ENCODE measurements at regions of chr20 and their contacts with region 1.

Region 1: DNA sequence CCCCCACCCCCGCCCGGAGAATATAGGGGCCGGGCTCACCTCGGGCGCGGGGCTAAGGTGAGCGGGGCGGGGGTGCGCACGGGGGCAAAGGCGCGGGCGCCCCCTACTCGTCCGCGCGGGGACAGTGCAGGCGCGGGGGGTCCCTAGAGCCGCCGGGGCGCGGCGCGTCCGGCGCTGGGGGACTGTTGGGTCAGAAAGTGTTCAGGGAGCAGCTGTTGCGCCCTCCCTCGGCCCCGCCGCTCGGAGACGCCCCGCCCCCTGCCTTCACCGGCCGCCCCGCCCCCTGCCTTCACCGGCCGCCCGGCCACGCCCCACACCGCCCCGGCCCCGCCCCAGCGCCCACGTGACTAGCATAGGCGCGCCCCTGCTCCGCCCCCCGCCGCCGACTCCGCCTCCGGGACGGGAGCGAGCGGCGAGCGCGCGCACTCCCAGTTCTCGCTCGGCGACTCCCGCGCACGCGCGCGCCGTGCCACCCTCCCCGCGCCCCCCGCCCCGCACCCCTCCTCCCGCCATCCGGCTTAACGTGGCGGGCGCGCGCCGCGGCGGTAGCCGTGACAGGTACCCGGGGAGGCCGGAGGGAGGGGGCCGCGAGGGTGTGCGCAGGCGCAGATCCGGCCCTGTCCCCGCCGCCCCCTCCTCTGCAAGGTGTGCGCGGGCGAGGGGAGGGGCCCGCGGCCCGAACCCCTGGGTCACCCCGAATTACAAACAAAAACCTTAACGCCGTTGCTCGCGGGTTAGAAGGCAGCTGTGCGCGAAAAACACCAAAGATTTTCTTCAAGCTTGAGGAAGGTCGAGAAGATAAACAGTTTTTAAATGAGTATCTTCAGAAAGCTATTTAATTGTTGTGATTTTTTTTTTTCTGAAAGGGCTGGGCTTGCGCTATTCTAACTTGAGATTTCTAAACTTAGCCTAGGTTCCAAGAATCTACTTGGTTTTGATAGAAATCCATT is 704 bp upstream of the ZNF217 start:
- DNase-seq: peak; percentile 95
- ATAC-seq: peak; percentile 82
- H3K4me3 Mint-ChIP-seq: peak overlapping the region; percentile 74
- H3K27ac Mint-ChIP-seq: peak overlapping the region; percentile 66; the same call in 1 of the 2 replicates
- H3K4me1 Mint-ChIP-seq: peaks cover 66% of the 10 kb centered on the region
- H3K27me3 Mint-ChIP-seq: no peaks in the 10 kb centered on the region
- CTCF ChIP-seq: peak; percentile 26; the same call in 1 of the 2 replicates

Region 2: DNA sequence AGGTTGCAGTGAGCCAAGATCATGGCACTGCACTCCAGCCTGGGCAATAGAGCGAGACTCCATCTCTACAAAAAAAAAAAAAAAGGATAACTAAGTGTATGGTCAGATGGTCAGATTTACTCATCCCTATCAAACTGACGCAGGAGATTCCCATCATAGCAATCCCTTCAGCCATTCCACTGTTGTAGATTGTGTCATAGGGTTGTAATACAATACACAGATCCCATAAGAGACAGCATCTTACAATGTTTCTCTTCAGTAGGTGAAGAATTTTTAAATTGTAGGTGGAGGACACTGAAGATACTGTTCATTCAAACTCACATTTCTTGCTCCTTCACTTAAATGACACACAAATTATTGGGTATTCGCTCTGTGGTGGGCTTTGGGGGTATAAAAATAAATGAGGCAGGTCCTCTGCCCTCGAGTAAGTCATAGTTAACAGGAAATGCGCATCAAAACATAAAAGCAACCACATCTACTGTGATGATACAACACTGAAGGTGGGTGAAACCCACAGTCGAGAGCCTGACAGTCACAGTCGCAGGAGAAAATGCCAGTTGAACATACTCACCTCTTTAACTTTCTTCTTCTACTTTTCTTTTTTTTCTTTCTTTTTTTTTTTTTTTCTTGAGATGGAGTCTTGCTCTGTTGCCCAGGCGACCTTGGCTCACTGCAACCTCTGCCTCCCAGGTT is 206.2 kb before region 1 on chr20:
- CTCF ChIA-PET with region 1: no interaction called
- POLR2A ChIA-PET with region 1: no interaction called
- DNase-seq: no peak
- ATAC-seq: no peak
- H3K4me3 Mint-ChIP-seq: no peak overlapping the region
- H3K27ac Mint-ChIP-seq: no peak overlapping the region
- H3K4me1 Mint-ChIP-seq: peaks cover 28% of the 10 kb centered on the region
- H3K27me3 Mint-ChIP-seq: no peaks in the 10 kb centered on the region
- CTCF ChIP-seq: no peak

Region 3: DNA sequence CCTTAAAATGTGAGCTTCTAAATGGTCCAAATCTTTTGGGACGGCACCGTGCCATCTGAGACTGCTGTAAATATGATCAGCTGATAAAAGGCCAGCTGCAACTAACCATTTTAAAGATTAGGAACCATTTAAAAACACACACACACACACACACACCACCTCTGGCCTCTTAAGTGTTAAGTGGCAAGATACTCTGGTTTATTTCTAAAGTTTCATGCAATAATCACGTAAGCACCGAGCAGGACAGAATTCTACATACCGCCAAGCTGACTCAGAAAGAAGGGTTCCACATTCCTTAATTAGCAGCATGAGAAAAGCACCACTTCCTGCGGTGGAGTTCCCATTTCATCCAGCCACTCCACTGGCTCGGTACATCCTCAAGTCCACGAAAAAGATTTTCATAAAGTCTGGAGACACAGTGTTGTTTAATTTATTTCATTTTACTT is 17.1 kb after region 1 on chr20:
- CTCF ChIA-PET with region 1: interaction called, 3 read pairs
- POLR2A ChIA-PET with region 1: interaction called, 11 read pairs
- DNase-seq: no peak
- ATAC-seq: peak; percentile 55
- H3K4me3 Mint-ChIP-seq: no peak overlapping the region
- H3K27ac Mint-ChIP-seq: peak overlapping the region; percentile 88; the same call in 1 of the 2 replicates
- H3K4me1 Mint-ChIP-seq: peaks cover 49% of the 10 kb centered on the region
- H3K27me3 Mint-ChIP-seq: no peaks in the 10 kb centered on the region
- CTCF ChIP-seq: no peak

Measured in WTC11 (cell line).